AG04449 (cell line): ENCODE measurements at regions of chr13 and their contacts with region 1.

Region 1: GRCh38 chr13:102870677-102871415 is 25.0 kb downstream of the ERCC5 start:
- DNase-seq: no peak
- H3K4me3 ChIP-seq: no peak overlapping the region
- CTCF ChIP-seq: peak; percentile 68

Region 2: DNA sequence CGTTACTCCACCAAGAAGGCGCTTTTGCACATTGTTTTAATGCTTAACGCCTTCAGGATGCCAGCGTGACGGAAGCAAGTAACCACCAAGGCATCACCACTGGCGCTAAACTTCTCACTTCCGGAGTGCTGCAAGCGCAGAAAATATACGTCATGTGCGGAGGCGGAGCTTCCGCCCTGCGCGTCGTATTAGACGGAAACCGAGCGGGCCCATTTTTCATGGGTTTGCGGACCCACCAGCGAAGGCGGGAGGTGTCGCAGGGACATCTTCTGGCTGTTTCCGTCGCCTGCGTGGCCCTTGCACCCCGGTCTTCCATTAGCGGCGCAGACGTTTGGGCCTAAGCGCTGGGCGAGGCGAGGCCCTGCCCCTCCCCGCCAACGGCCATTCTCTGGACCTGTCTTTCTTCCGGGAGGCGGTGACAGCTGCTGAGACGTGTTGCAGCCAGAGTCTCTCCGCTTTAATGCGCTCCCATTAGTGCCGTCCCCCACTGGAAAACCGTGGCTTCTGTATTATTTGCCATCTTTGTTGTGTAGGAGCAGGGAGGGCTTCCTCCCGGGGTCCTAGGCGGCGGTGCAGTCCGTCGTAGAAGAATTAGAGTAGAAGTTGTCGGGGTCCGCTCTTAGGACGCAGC is 25.1 kb before region 1 on chr13 and contains the start of gene ERCC5:
- CTCF ChIA-PET with region 1: interaction called, 29 read pairs
- POLR2A ChIA-PET with region 1: no interaction called
- DNase-seq: peak; percentile 74
- H3K4me3 ChIP-seq: peak within 1 kb of the TSS; percentile 95
- CTCF ChIP-seq: no peak

Region 3: GRCh38 chr13:102854675-102855074 is 16.2 kb before region 1 on chr13:
- CTCF ChIA-PET with region 1: interaction called, 30 read pairs
- POLR2A ChIA-PET with region 1: no interaction called
- DNase-seq: no peak
- H3K4me3 ChIP-seq: no peak overlapping the region
- CTCF ChIP-seq: no peak

Region 4: GRCh38 chr13:102928941-102929675 is 58.3 kb after region 1 on chr13:
- CTCF ChIA-PET with region 1: no interaction called
- POLR2A ChIA-PET with region 1: no interaction called
- DNase-seq: no peak
- H3K4me3 ChIP-seq: no peak overlapping the region
- CTCF ChIP-seq: no peak